ENCODE measurements at regions of chr16 and their contacts with region 1.

Region 1: DNA sequence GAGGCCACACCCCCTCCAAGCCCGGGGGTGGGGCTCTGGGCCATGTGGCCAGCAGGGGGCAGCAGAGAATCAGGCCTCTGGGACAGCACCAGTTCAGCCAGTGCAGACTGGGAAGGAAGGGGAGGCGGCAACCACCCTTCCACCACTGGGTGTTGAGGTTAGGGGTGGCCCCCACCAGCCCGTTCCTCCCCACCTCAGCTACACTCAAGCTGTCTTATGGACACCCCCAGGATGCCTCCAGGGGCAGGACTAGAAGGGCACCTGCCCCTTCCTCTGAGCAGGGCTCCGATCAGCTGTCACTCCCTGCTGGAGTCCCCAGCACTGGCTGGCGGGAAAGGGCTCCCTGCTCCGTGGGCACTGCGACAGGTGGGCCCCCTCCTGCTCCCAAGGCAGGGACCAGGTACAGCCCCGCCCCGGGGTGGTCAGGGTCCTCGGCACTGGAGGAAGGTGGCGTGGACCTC is 21.8 kb downstream of the KATNB1 start:
- DNase-seq: peak; percentile 97

Region 2: DNA sequence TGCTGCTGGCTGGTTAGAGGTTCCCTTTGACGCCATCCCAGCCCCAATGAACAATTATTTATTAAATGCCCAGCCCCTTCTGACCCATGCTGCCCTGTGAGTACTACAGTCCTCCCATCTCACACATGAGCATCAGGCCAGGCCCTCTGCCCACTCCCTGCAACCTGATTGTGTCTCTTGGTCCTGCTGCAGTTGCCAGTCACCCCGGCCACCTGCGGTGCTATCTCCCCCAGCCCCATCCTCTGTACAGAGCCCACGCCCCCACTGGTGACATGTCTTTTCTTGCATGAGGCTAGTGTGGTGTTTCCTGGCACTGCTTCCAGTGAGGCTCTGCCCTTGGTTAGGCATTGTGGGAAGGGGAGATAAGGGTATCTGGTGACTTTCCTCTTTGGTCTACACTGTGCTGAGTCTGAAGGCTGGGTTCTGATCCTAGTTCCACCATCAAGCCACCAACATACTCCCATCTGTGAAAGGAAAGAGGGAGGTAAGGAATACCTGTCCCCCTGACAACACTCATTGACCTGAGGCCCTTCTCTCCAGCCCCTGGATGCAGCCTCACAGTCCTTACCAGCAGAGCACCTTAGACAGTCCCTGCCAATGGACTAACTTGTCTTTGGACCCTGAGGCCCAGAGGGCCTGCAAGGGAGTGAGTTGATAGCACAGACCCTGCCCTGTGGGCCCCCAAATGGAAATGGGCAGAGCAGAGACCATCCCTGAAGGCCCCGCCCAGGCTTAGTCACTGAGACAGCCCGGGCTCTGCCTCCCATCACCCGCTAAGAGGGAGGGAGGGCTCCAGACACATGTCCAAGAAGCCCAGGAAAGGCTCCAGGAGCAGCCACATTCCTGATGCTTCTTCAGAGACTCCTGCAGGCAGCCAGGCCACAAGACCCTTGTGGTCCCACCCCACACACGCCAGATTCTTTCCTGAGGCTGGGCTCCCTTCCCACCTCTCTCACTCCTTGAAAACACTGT is 373.8 kb before region 1 on chr16:
- intact Hi-C with region 1: no loop called
- DNase-seq: no peak

Region 3: DNA sequence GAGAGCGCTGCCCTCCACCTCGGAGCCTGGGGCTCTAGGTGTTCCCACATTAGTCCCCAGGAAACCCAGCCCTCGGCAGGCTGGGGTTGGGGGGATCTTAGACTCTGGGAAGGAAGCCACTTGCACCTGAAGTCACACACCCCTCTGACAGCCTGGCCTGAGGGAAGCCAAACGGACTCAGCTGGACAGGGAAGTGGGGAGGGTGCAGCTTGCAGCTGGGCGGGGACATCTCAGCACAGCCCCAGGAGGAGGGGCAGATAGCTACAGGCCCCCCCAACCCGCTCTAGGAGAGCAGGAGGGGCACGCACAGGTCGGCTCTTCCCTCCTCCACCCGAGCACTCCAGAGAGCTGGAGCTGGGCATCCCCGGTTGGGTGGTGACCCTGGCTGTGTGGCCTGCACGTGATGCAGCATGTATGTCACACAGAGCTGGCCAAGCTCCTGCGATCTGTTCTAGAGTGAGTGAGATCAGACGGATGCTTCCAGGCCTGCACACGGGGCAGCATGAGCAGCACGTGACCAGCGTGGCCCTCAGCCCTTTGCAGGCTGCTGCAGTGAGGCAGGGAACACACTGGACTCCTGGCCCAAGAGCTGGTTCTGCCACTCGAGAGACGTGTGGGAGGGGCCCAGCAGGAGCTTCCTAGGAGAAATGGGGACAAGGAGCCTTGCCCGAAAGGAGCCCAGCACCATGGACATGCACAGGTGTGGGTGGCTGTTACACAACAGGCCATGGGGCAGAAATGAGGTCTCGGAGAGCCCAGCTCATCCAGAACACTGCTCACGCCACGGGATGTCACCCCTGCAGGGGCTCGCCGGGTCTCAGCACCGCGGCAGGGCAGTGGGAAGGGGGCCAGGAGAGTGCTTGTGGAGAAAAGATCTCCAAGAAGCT is 29.5 kb after region 1 on chr16:
- intact Hi-C with region 1: loop called (anchors 2 kb)
- DNase-seq: peak; percentile 92

Region 4: DNA sequence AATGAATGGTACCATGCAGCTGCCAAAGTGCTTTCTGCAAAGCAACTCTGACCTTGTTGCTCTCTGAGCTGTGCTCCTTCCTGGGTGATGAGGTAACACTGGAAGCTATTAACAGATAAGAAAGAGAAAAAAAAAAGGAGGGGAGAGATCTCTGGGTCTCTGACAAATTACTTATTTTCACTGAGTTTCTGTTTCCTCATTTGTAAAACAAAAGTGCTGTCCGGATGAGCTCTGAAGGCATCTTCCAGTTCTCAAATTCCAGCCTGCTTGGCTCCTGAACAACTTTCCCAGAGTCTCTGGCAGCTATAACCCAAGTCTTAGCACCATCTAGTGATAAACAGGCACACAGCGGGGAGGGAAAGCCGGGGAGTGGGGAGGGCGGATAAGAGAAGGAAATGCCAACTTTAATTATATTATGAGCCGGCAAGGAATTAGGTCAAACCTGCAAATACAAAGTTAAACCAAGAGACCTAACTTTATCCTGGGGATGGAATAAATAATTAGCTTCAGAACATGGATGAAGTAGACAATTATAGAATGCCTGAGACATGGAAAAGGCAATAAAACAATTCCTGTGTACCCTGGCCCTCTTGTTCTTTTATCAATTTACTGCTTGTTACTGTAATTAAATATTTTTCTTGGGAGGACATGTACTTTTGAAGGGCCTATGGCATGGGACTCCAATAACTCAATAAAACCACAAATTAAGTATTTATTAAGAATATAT is 106.2 kb after region 1 on chr16:
- intact Hi-C with region 1: loop called (anchors 1 kb)
- DNase-seq: no peak